ENCODE measurements at regions of chr7 and their contacts with region 1.

Region 1: GRCh38 chr7:32212321-32212720 is 142.1 kb upstream of the PDE1C start:
- DNase-seq: no peak
- ATAC-seq: peak in 1 of 4 donors; percentile 43
- H3K4me3 ChIP-seq: no peak overlapping the region
- H3K27ac ChIP-seq: no peak overlapping the region
- H3K4me1 ChIP-seq: peaks cover 0 to 2% (median 0%) of the 10 kb centered on the region in 12 donors
- H3K27me3 ChIP-seq: peaks cover 0 to 6% (median 0%) of the 10 kb centered on the region in 9 donors
- CTCF ChIP-seq: no peak
- POLR2A ChIP-seq: no peak

Region 2: GRCh38 chr7:32347244-32347828 is 135.0 kb after region 1 on chr7:
- intact Hi-C with region 1: loop called (anchors 2 to 5 kb)
- DNase-seq: no peak
- ATAC-seq: no peak
- H3K4me3 ChIP-seq: no peak overlapping the region
- H3K27ac ChIP-seq: no peak overlapping the region
- H3K4me1 ChIP-seq: no peaks in the 10 kb centered on the region
- H3K27me3 ChIP-seq: no peaks in the 10 kb centered on the region
- CTCF ChIP-seq: peak; percentile 45 to 76 (median 66)
- POLR2A ChIP-seq: no peak

Region 3: GRCh38 chr7:32479574-32480200 is 267.4 kb after region 1 on chr7:
- intact Hi-C with region 1: loop called (anchors 1 to 5 kb)
- DNase-seq: no peak
- ATAC-seq: peak in 1 of 4 donors; percentile 58
- H3K4me3 ChIP-seq: no peak overlapping the region
- H3K27ac ChIP-seq: no peak overlapping the region
- H3K4me1 ChIP-seq: peaks cover 0 to 14% (median 0%) of the 10 kb centered on the region in 12 donors
- H3K27me3 ChIP-seq: no peaks in the 10 kb centered on the region
- CTCF ChIP-seq: peak; percentile 60 to 84 (median 66)
- POLR2A ChIP-seq: no peak

Measured in heart left ventricle (tissue), 16 donors.